Transverse colon (tissue), 4 donors: ENCODE measurements at regions of chr11 and their contacts with region 1.

Region 1: GRCh38 chr11:47176328-47177228 is at the start of gene ARFGAP2:
- DNase-seq: peak; percentile 97
- H3K4me3 ChIP-seq: peak within 1 kb of the TSS; percentile 86 to 96 (median 88)
- H3K27ac ChIP-seq: peak within 1 kb of the TSS; percentile 91 to 99 (median 95)
- H3K4me1 ChIP-seq: peaks cover 15 to 39% (median 24%) of the 10 kb centered on the region in 4 donors
- H3K27me3 ChIP-seq: no peaks in the 10 kb centered on the region
- CTCF ChIP-seq: no peak
- EP300 ChIP-seq: peak; percentile 13
- POLR2A ChIP-seq: no peak
- total RNA-seq, gene ARFGAP2: 123 to 213 (median 132) TPM

Region 2: DNA sequence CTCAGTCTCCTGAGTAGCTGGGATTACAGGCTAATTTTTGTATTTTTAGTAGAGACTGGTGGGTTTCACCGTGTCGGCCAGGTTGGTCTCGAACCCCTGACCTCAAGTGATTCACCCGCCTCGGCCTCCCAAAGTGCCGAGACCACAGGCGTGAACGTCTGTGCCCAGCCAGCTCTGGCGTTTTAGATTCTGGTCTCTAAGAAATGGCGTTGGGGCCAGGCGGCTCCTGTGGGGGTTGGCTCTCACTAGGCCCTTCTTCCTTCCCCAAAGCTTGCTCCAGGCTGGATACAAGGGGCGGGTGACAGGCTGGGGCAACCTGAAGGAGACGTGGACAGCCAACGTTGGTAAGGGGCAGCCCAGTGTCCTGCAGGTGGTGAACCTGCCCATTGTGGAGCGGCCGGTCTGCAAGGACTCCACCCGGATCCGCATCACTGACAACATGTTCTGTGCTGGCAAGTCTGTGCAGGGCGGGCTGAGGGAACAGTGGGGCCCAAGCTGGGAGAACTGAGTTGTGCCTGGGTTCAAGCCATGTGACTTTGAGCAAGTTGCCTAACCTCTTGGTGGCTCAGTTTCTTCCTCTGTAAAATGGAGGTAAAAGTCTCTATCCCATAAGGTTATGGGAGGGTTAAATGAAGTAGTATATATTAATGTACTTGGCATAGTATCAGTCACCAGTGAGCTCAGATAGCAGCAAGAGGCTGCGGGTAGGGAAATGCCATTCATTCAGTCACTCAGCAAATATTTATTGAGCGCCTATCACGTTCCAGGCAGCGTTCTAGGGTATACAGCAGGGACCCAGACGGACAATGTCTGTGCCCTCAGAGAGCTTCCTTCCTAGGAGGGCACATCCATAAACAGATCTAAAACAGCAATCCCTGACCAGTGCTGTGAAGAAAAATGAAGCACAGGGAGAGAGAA is 447.2 kb before region 1 on chr11:
- in situ Hi-C with region 1: no loop called
- intact Hi-C with region 1: loop called (anchors 5 kb)
- DNase-seq: no peak
- H3K4me3 ChIP-seq: no peak overlapping the region
- H3K27ac ChIP-seq: no peak overlapping the region
- H3K4me1 ChIP-seq: no peaks in the 10 kb centered on the region
- H3K27me3 ChIP-seq: no peaks in the 10 kb centered on the region
- CTCF ChIP-seq: no peak
- EP300 ChIP-seq: no peak
- POLR2A ChIP-seq: no peak

Region 3: GRCh38 chr11:47233989-47234668 is 57.6 kb after region 1 on chr11:
- in situ Hi-C with region 1: no loop called
- intact Hi-C with region 1: loop called (anchors 10 kb)
- DNase-seq: peak; percentile 24
- H3K4me3 ChIP-seq: no peak overlapping the region
- H3K27ac ChIP-seq: peak overlapping the region; percentile 22 to 38 (median 32)
- H3K4me1 ChIP-seq: peaks cover 0 to 7% (median 3%) of the 10 kb centered on the region in 4 donors
- H3K27me3 ChIP-seq: no peaks in the 10 kb centered on the region
- CTCF ChIP-seq: peak in 2 of 5 experiments; percentile 18
- EP300 ChIP-seq: no peak
- POLR2A ChIP-seq: no peak

Region 4: DNA sequence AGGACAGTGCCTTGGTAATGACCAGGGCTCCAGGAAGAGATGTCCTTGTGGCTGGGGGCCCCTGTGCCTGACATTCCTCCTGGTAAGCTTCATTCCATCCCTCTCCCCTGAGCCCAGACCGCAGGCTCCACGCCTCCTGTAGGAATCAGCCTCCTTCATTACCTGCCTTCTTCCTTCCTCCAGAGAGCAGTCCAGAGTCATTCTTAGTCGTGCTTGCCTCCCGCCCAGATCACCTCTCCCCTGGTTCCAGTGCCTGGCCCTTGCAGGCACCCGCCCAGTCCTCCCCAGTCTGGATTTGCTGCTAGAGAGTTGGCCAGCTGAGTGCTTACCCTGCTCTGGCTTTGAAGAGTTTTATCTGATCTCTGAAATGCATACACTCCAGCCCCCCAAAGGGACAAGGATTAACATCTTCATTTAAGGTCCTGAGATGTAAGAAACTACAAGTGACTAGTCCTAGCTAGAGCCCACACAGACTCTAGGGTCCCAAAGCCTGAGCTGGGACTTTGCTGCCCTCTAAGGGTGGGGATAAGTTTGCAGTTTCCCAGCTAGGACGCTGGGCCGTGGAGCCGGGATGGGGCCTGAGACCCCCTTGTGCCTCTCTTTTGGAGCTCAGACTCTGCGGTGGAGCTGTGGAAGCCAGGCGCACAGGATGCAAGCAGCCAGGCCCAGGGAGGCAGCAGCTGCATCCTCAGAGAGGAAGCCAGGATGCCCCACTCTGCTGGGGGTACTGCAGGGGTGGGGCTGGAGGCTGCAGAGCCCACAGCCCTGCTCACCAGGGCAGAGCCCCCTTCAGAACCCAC is 82.8 kb after region 1 on chr11:
- in situ Hi-C with region 1: loop called in 2 of 4 experiments (anchors 5 to 10 kb)
- intact Hi-C with region 1: no loop called
- DNase-seq: peak; percentile 83
- H3K4me3 ChIP-seq: peak overlapping the region in 1 of 4 donors; percentile 41
- H3K27ac ChIP-seq: peak overlapping the region; percentile 73 to 88 (median 82)
- H3K4me1 ChIP-seq: peaks cover 16 to 54% (median 46%) of the 10 kb centered on the region in 4 donors
- H3K27me3 ChIP-seq: no peaks in the 10 kb centered on the region
- CTCF ChIP-seq: peak; percentile 55 to 84 (median 60)
- EP300 ChIP-seq: no peak
- POLR2A ChIP-seq: peak; percentile 52

Region 5: DNA sequence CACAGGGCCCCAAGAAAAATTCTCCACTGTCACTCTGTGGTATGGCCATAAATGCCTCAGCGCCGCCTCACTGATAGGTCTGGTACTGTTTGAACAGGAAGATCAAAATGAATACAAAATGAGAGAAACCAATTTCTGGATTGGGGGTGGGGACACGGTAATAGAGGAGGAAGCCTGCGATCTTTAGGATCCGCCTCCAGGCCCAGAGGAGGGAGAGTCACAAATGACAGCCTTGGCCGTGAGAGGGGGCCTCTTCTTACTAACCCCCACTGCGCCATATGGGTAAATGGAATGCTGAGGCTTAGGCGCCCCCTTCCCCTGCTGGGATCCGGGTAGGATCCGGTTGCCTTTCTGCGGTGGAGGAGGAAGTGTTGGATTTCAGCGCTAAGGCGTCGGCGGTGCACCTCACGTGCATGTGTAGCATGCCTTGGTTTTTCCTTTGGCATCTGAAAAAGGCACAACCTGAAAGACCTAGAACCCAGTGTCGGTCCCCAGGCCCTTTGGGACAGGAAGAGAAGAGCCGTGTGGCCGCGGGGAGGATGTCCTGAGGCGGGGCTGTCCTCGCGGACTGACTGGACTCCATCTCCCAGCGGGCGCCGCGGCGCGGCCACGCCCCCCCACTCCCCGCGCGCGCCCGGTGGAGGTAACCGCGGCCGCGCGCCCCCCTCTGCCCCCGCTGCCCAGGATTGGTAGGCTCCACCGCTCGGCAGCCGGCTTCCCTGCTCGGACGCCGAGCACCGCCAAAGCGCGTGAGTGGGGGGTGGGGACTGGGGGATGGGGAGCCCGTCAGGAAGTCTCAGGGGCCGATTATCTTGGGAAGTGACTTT is 92.6 kb after region 1 on chr11:
- in situ Hi-C with region 1: loop called in 1 of 4 experiments (anchors 10 kb)
- intact Hi-C with region 1: no loop called
- DNase-seq: peak; percentile 91
- H3K4me3 ChIP-seq: peak overlapping the region; percentile 63 to 95 (median 88)
- H3K27ac ChIP-seq: peak overlapping the region; percentile 94 to 98 (median 97)
- H3K4me1 ChIP-seq: peaks cover 26 to 51% (median 41%) of the 10 kb centered on the region in 4 donors
- H3K27me3 ChIP-seq: no peaks in the 10 kb centered on the region
- CTCF ChIP-seq: peak in 4 of 5 experiments; percentile 24 to 60 (median 42)
- EP300 ChIP-seq: no peak
- POLR2A ChIP-seq: peak; percentile 62

Region 6: DNA sequence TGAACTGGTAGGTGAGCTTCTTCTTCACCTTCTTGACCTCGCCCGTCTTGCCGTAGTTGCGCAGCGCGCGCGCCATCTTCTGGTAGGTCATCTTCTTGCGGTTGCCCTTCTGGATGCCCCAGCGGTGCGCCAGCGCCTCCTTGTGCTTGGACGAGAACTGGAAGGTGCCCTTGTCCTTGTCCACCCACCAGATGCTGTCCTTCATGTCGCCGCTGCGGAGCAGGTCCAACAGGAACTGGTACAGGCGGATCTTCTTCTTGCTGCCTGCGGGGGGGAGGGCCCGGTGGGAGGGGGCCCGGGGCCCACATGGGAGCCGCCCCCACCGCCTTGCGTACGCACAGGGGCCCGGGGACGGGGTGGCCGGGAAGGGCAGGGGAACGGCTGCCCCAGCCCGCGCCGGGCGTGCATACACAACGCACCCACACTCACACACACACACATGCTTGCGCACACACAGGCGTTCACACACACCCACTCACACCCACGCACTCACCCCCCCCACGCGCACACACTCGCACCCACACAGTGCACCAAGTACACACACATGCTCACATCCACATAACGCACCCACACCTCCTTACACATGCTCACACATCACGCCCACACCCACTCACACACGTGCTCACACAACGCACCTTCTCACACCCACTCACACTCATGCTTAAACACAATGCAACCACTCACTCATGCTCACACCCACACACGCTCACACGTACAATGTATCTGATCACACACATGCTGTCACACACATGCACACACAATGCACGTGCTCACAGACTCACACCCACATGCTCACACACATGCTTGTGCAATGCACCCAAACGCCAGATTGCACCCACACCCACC is 178.9 kb after region 1 on chr11:
- in situ Hi-C with region 1: loop called in 1 of 4 experiments (anchors 25 kb)
- intact Hi-C with region 1: loop called (anchors 5 kb)
- DNase-seq: peak; percentile 97
- H3K4me3 ChIP-seq: peak overlapping the region; percentile 23 to 55 (median 44)
- H3K27ac ChIP-seq: peak overlapping the region; percentile 72 to 81 (median 76)
- H3K4me1 ChIP-seq: peaks cover 0 to 10% (median 5%) of the 10 kb centered on the region in 4 donors
- H3K27me3 ChIP-seq: no peaks in the 10 kb centered on the region
- CTCF ChIP-seq: peak; percentile 90 to 99 (median 97)
- EP300 ChIP-seq: no peak
- POLR2A ChIP-seq: no peak

Region 7: GRCh38 chr11:47373876-47374720 is 197.5 kb after region 1 on chr11:
- in situ Hi-C with region 1: loop called in 1 of 4 experiments (anchors 25 kb)
- intact Hi-C with region 1: no loop called
- DNase-seq: peak; percentile 85
- H3K4me3 ChIP-seq: no peak overlapping the region
- H3K27ac ChIP-seq: no peak overlapping the region
- H3K4me1 ChIP-seq: no peaks in the 10 kb centered on the region
- H3K27me3 ChIP-seq: no peaks in the 10 kb centered on the region
- CTCF ChIP-seq: peak; percentile 91 to 96 (median 94)
- EP300 ChIP-seq: no peak
- POLR2A ChIP-seq: no peak